ENCODE measurements at regions of chr11 and their contacts with region 1.

Region 1: DNA sequence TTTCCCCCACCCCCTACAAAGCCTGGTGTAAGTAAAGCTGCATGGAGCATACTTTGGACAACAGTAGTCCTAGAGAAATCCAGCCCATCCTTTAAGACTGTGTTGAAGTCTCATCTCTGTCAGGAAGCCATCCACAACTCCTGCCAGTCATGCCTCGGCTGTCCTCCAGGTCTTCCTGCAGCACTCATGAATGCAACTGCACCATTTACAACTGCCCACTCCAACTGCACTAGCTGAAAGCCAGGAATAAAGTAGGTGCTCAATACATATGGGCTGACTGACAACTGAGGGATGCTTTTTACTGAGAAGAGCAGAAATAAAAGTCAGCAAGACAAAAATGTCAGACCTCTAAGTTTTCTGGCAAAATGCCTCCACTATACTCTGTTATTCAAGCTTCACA is 27.4 kb downstream of the IL18BP start:
- DNase-seq: no peak
- H3K4me3 ChIP-seq: no peak overlapping the region
- H3K27ac ChIP-seq: peak overlapping the region in 2 of 5 donors; percentile 54 to 70
- H3K4me1 ChIP-seq: peaks cover 9 to 59% of the 10 kb centered on the region in 2 donors
- H3K27me3 ChIP-seq: no peaks in the 10 kb centered on the region
- CTCF ChIP-seq: no peak
- POLR2A ChIP-seq: no peak

Region 2: GRCh38 chr11:72091005-72091691 is 65.1 kb after region 1 on chr11:
- intact Hi-C with region 1: loop called (anchors 5 kb)
- DNase-seq: peak; percentile 78 to 91 (median 83)
- H3K4me3 ChIP-seq: no peak overlapping the region
- H3K27ac ChIP-seq: peak overlapping the region in 2 of 5 donors; percentile 50 to 67
- H3K4me1 ChIP-seq: peaks cover 4 to 28% of the 10 kb centered on the region in 2 donors
- H3K27me3 ChIP-seq: no peaks in the 10 kb centered on the region
- CTCF ChIP-seq: peak; percentile 70 to 98 (median 92)
- POLR2A ChIP-seq: no peak

Region 3: GRCh38 chr11:72102946-72103753 is 77.1 kb after region 1 on chr11 and contains the start of gene LAMTOR1:
- intact Hi-C with region 1: loop called in 1 of 2 experiments (anchors 5 kb)
- DNase-seq: peak; percentile 99 to 100 (median 100)
- H3K4me3 ChIP-seq: peak within 1 kb of the TSS; percentile 58 to 91 (median 82)
- H3K27ac ChIP-seq: peak within 1 kb of the TSS in 4 of 5 donors; percentile 83 to 95 (median 92)
- H3K4me1 ChIP-seq: peaks cover 35 to 41% of the 10 kb centered on the region in 2 donors
- H3K27me3 ChIP-seq: no peaks in the 10 kb centered on the region
- CTCF ChIP-seq: peak; percentile 19 to 80 (median 58)
- POLR2A ChIP-seq: peak; percentile 65 to 78
- total RNA-seq, gene LAMTOR1: 107 to 297 (median 145) TPM

Measured in adrenal gland (tissue), 19 donors.